Naive thymus-derived CD4-positive, alpha-beta T cell (primary cell): ENCODE measurements at regions of chr4 and their contacts with region 1.

Region 1: GRCh38 chr4:44684648-44685047 is 6.4 kb downstream of the GUF1 start:
- DNase-seq: no peak
- ATAC-seq: no peak
- H3K4me3 ChIP-seq: no peak overlapping the region
- H3K4me3 Mint-ChIP-seq: no peak overlapping the region
- H3K27ac ChIP-seq: no peak overlapping the region
- H3K27ac Mint-ChIP-seq: peak overlapping the region in 2 of 9 donors; percentile 16 to 46
- H3K4me1 ChIP-seq: peaks cover 0 to 4% of the 10 kb centered on the region in 2 donors
- H3K4me1 Mint-ChIP-seq: peaks cover 2 to 52% (median 37%) of the 10 kb centered on the region in 7 donors
- H3K27me3 ChIP-seq: no peaks in the 10 kb centered on the region
- H3K27me3 Mint-ChIP-seq: no peaks in the 10 kb centered on the region

Region 2: GRCh38 chr4:44674471-44674870 is 10.2 kb before region 1 on chr4:
- CTCF ChIA-PET with region 1: no interaction called
- POLR2A ChIA-PET with region 1: no interaction called
- intact Hi-C with region 1: no loop called
- DNase-seq: no peak
- ATAC-seq: no peak
- H3K4me3 ChIP-seq: no peak overlapping the region
- H3K4me3 Mint-ChIP-seq: no peak overlapping the region
- H3K27ac ChIP-seq: no peak overlapping the region
- H3K27ac Mint-ChIP-seq: no peak overlapping the region
- H3K4me1 ChIP-seq: peaks cover 8 to 9% of the 10 kb centered on the region in 2 donors
- H3K4me1 Mint-ChIP-seq: peaks cover 5 to 24% (median 15%) of the 10 kb centered on the region in 7 donors
- H3K27me3 ChIP-seq: no peaks in the 10 kb centered on the region
- H3K27me3 Mint-ChIP-seq: peaks cover 0 to 16% (median 5%) of the 10 kb centered on the region in 5 donors

Region 3: GRCh38 chr4:44701037-44701436 is 16.4 kb after region 1 on chr4:
- CTCF ChIA-PET with region 1: no interaction called
- POLR2A ChIA-PET with region 1: no interaction called
- intact Hi-C with region 1: loop called (anchors 2 kb)
- DNase-seq: no peak
- ATAC-seq: no peak
- H3K4me3 ChIP-seq: no peak overlapping the region
- H3K4me3 Mint-ChIP-seq: no peak overlapping the region
- H3K27ac ChIP-seq: no peak overlapping the region
- H3K27ac Mint-ChIP-seq: peak overlapping the region in 3 of 9 donors; percentile 6 to 75 (median 57)
- H3K4me1 ChIP-seq: no peaks in the 10 kb centered on the region
- H3K4me1 Mint-ChIP-seq: peaks cover 0 to 6% (median 0%) of the 10 kb centered on the region in 7 donors
- H3K27me3 ChIP-seq: no peaks in the 10 kb centered on the region
- H3K27me3 Mint-ChIP-seq: no peaks in the 10 kb centered on the region